ENCODE measurements at regions of chr11 and their contacts with region 1.

Region 1: DNA sequence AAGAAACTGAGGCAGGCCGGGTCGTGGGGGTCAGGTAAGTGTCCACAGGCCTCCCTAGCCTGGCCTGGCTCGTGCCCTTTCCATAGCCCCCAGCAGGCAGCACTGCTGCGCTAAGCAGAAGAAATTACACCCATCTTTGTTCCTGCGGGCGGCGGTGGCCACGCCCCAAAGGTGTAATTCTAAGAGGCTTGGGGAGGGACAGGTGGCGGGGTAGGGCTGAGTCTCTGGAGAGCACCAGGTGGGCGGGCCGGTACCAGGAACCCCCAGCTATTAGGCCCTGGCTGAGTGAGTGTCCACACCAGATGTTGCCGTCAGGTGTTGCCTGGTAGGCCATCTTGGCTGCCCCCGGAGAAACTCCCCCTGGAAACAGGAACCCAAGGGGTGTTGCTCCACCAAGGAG is 12.3 kb upstream of the ARAP1 start:
- DNase-seq: peak; percentile 74 to 78
- H3K4me3 ChIP-seq: no peak overlapping the region
- H3K4me3 Mint-ChIP-seq: no peak overlapping the region
- H3K27ac Mint-ChIP-seq: no peak overlapping the region
- H3K4me1 ChIP-seq: peaks cover 32% of the 10 kb centered on the region
- H3K4me1 Mint-ChIP-seq: peaks cover 38% of the 10 kb centered on the region
- H3K27me3 ChIP-seq: no peaks in the 10 kb centered on the region
- H3K27me3 Mint-ChIP-seq: no peaks in the 10 kb centered on the region
- CTCF ChIP-seq: peak; percentile 59 to 80

Region 2: GRCh38 chr11:72781313-72782050 is 17.0 kb after region 1 on chr11:
- CTCF ChIA-PET with region 1: interaction called, 9 read pairs
- POLR2A ChIA-PET with region 1: interaction called, 7 read pairs
- intact Hi-C with region 1: loop called (anchors 1 kb)
- DNase-seq: peak; percentile 80
- H3K4me3 ChIP-seq: peak overlapping the region; percentile 88
- H3K4me3 Mint-ChIP-seq: peak overlapping the region; percentile 74
- H3K27ac Mint-ChIP-seq: peak overlapping the region; percentile 99
- H3K4me1 ChIP-seq: peaks cover 85% of the 10 kb centered on the region
- H3K4me1 Mint-ChIP-seq: peaks cover 64% of the 10 kb centered on the region
- H3K27me3 ChIP-seq: no peaks in the 10 kb centered on the region
- H3K27me3 Mint-ChIP-seq: no peaks in the 10 kb centered on the region
- CTCF ChIP-seq: peak in 1 of 2 experiments; percentile 23